MCF 10A (cell line): ENCODE measurements at regions of chr13 and their contacts with region 1.

Region 1: GRCh38 chr13:95191821-95192563 is 109.3 kb downstream of the ABCC4 start:
- DNase-seq: peak; percentile 68
- H3K4me3 Mint-ChIP-seq: no peak overlapping the region
- H3K27ac Mint-ChIP-seq: no peak overlapping the region
- H3K4me1 Mint-ChIP-seq: no peaks in the 10 kb centered on the region
- H3K27me3 Mint-ChIP-seq: no peaks in the 10 kb centered on the region
- CTCF ChIP-seq: peak; percentile 68

Region 2: DNA sequence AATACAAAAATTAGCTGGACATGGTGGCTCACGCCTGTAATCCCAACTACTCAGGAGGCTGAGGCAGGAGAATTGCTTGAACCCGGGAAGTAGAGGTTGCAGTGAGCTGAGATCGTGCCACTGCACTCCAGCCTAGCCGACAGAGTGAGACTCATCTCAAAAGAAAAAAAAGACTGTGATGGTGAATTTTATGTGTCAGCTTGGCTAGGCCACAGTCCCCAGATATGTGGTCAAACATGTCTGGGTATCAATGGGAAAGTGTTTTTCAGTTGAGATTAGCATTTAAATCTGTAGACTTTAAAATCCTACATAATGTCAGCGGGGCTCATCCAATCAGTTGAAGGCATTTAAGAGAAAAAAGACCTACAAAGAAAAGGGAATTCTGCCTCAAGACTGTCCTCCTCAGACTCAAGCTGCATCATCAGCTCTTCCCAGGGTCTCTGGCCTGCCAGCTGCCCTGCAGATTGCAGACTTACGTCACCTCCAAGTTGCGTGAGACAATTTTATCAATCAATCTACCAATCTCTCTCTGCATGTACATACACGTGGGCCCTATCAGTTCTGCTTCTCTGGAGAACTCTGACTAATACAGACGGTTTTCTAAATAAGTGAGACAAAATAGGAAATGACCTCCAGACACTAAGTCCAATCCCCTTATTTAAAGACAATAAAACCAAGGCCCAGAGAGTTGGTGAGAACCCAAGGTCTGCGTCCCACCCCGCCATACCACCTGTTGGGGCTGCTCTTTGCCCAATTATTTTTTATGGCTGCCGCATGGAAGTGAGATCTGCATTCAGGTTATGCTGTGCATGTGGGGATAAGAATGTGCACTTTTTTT is 10.0 kb after region 1 on chr13:
- CTCF ChIA-PET with region 1: interaction called, 17 read pairs
- POLR2A ChIA-PET with region 1: no interaction called
- intact Hi-C with region 1: no loop called
- DNase-seq: no peak
- H3K4me3 Mint-ChIP-seq: no peak overlapping the region
- H3K27ac Mint-ChIP-seq: no peak overlapping the region
- H3K4me1 Mint-ChIP-seq: no peaks in the 10 kb centered on the region
- H3K27me3 Mint-ChIP-seq: no peaks in the 10 kb centered on the region
- CTCF ChIP-seq: no peak

Region 3: GRCh38 chr13:95301183-95301967 is 109.4 kb after region 1 on chr13 and contains the start of gene ABCC4:
- CTCF ChIA-PET with region 1: interaction called, 76 read pairs
- POLR2A ChIA-PET with region 1: no interaction called
- intact Hi-C with region 1: loop called (anchors 1 kb)
- DNase-seq: peak; percentile 66
- H3K4me3 Mint-ChIP-seq: peak within 1 kb of the TSS; percentile 75
- H3K27ac Mint-ChIP-seq: peak within 1 kb of the TSS; percentile 41
- H3K4me1 Mint-ChIP-seq: peaks cover 10% of the 10 kb centered on the region
- H3K27me3 Mint-ChIP-seq: no peaks in the 10 kb centered on the region
- CTCF ChIP-seq: no peak
- total RNA-seq, gene ABCC4: 13.8 and 13.9 TPM in 2 replicates

Region 4: DNA sequence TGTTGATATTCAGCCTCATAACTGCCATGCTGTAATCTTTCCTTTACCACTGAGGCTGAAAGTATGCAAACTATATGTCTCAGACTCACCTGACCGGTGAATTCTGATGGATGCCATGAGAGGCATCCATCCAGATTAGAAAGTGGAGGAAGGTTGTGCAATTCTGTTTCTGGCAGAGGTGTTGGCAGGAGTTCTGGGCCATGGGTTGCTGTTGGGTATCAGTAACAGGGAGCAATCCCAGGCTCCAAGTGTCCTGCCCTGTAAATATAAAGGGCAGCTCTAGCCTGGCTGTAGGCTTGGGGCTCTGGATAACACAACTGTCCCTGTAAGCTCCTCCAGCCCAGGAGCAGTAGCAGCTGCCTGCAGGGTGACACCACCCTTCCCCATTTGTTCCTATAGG is 186.6 kb after region 1 on chr13:
- CTCF ChIA-PET with region 1: interaction called, 273 read pairs
- POLR2A ChIA-PET with region 1: interaction called, 10 read pairs
- intact Hi-C with region 1: loop called (anchors 1 kb)
- DNase-seq: peak; percentile 54
- H3K4me3 Mint-ChIP-seq: no peak overlapping the region
- H3K27ac Mint-ChIP-seq: no peak overlapping the region
- H3K4me1 Mint-ChIP-seq: peaks cover 6% of the 10 kb centered on the region
- H3K27me3 Mint-ChIP-seq: peaks cover 14% of the 10 kb centered on the region
- CTCF ChIP-seq: no peak

Region 5: GRCh38 chr13:95564733-95565291 is 372.8 kb after region 1 on chr13:
- CTCF ChIA-PET with region 1: no interaction called
- POLR2A ChIA-PET with region 1: no interaction called
- intact Hi-C with region 1: loop called (anchors 1 kb)
- DNase-seq: peak; percentile 92
- H3K4me3 Mint-ChIP-seq: peak overlapping the region; percentile 56
- H3K27ac Mint-ChIP-seq: peak overlapping the region; percentile 17
- H3K4me1 Mint-ChIP-seq: peaks cover 26% of the 10 kb centered on the region
- H3K27me3 Mint-ChIP-seq: no peaks in the 10 kb centered on the region
- CTCF ChIP-seq: no peak